ENCODE measurements at regions of chr3 and their contacts with region 1.

Region 1: DNA sequence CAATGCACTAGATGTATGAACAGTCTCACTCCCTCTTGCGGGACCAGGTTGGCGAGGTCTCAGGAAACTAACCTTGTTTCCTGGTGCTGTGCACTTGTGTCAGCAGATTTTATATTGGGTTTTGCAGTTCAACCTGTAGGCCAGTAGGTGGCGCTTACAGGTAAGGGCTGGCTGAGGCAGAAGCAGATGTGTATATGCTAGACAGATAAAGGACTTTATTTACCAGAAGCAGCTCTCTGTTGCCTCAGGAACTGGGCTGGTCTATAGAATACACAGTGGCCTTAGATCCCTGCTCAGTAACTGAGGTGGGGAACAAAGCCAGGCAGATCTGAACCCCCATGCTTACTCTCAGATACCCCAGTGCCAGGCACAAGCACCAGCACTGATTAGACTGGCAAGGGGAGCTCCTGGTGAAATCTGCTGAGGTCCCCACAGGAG is 296.8 kb downstream of the DOCK3 start:
- DNase-seq: peak; percentile 72
- ATAC-seq: peak; percentile 97
- H3K4me3 Mint-ChIP-seq: no peak overlapping the region
- H3K27ac Mint-ChIP-seq: peak overlapping the region; percentile 43
- H3K4me1 Mint-ChIP-seq: peaks cover 16% of the 10 kb centered on the region
- H3K27me3 Mint-ChIP-seq: no peaks in the 10 kb centered on the region

Region 2: GRCh38 chr3:51311055-51311454 is 339.5 kb after region 1 on chr3:
- CTCF ChIA-PET with region 1: interaction called, 23 read pairs
- POLR2A ChIA-PET with region 1: no interaction called
- DNase-seq: no peak
- ATAC-seq: no peak
- H3K4me3 Mint-ChIP-seq: no peak overlapping the region
- H3K27ac Mint-ChIP-seq: no peak overlapping the region
- H3K4me1 Mint-ChIP-seq: no peaks in the 10 kb centered on the region
- H3K27me3 Mint-ChIP-seq: no peaks in the 10 kb centered on the region

Region 3: GRCh38 chr3:51371943-51372557 is 400.5 kb after region 1 on chr3:
- CTCF ChIA-PET with region 1: interaction called, 50 read pairs
- POLR2A ChIA-PET with region 1: no interaction called
- DNase-seq: peak; percentile 75
- ATAC-seq: peak; percentile 61
- H3K4me3 Mint-ChIP-seq: no peak overlapping the region
- H3K27ac Mint-ChIP-seq: no peak overlapping the region
- H3K4me1 Mint-ChIP-seq: no peaks in the 10 kb centered on the region
- H3K27me3 Mint-ChIP-seq: no peaks in the 10 kb centered on the region

Region 4: DNA sequence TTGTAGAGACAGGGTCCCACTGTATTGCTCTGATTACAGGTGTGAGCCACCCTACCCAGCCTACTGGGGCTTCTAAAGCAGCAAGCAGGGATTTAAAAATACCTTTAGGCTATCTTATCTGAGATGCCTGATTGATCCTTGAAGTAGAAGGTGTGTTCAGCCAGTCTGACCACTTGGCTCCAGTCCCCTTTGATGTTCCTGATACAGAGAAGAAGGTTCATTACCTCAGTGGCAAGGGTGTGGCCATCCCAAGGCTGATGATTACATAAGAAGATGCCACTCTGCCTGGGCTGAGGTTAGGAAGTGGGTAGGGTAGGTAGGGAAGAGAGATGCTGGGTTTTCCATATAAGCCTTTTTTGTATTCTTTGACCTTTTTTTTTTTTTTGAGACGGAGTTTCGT is 539.5 kb after region 1 on chr3:
- CTCF ChIA-PET with region 1: no interaction called
- POLR2A ChIA-PET with region 1: no interaction called
- DNase-seq: no peak
- ATAC-seq: no peak
- H3K4me3 Mint-ChIP-seq: no peak overlapping the region
- H3K27ac Mint-ChIP-seq: no peak overlapping the region
- H3K4me1 Mint-ChIP-seq: peaks cover 23% of the 10 kb centered on the region
- H3K27me3 Mint-ChIP-seq: no peaks in the 10 kb centered on the region

Measured in activated CD8-positive, alpha-beta T cell treated with anti-CD3 and anti-CD28 coated beads, Interleukin-2, amount 10 ng/mL, durations not matched to agents 7 days and 5 days (primary cell).